BJ (cell line): ENCODE measurements at regions of chr11 and their contacts with region 1.

Region 1: DNA sequence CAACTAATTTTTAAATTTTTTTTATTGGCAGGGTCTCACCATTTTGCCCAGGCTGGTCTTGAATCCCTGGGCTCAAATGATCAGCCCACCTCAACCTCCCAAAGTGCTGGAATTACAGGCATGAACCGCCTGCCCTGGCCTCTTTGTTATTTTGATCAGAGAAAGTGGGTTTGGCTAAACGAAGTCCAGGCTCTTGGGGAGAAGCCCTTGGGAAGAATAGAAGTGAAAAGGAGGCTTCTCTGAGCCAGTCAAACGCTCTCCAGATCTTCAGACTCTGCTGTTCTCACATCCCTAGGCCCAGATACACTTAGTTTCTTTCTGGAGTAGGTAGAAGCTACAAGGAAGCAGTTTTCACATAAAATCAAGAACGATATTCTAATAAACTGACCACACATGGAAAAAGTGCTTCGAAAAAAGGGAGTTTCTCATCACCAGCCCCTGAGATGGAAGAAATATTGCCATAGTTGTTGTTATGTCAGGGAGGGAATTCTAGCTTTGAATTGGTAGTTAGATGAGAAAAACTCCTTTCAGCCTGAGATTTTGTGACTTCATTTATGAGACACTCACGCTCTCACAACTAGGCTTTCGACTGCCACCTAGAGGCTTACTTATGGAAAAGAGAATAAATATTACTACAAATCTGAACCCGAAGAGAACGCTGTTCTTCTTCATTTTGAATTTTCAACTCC is 41.7 kb upstream of the AQP11 start:
- DNase-seq: no peak
- H3K4me3 ChIP-seq: no peak overlapping the region
- H3K27me3 ChIP-seq: no peaks in the 10 kb centered on the region
- CTCF ChIP-seq: peak; percentile 66

Region 2: DNA sequence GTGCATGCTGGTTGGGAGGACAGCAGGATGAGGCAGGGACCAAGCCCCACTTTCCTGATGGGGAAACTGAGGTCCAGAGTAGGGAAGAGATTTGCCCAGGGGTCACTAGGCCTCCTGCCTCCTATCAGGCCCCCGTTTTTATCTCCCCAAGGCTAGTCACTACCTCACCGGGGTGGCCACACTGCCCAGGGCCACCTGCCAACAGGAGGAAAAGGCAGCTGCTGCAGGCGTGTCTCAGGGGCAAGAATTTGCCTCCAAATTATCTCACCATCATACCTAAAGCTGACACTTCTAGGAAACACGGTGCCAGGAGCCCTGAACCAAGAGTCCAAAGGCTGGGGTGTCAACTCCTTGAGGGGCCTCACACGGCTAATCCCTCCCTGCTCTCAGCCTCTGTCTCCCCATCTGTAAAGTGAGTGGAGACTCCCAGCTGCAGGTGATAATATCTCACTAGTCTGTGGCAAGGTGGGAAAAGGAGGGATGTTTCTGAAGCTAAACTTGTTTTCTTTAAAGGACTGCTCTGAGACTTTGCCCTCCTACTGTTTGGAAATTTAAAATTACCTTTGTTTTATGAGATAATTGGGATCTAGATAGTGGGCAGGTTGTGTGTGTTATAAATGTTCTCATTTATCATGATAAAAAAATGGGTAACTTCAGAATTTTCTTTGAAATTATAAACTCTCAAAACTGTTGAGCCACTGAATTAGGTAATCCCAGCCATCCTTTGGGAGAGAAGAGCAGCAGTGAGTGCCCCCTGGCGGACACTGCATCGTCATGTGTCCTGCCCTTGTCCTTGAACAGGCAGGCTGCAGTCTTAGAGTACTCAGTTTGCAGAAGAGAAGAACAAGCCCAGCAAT is 360.0 kb before region 1 on chr11:
- CTCF ChIA-PET with region 1: interaction called, 20 read pairs
- POLR2A ChIA-PET with region 1: no interaction called
- DNase-seq: no peak
- H3K4me3 ChIP-seq: no peak overlapping the region
- H3K27me3 ChIP-seq: peaks cover 6% of the 10 kb centered on the region
- CTCF ChIP-seq: peak; percentile 92

Region 3: DNA sequence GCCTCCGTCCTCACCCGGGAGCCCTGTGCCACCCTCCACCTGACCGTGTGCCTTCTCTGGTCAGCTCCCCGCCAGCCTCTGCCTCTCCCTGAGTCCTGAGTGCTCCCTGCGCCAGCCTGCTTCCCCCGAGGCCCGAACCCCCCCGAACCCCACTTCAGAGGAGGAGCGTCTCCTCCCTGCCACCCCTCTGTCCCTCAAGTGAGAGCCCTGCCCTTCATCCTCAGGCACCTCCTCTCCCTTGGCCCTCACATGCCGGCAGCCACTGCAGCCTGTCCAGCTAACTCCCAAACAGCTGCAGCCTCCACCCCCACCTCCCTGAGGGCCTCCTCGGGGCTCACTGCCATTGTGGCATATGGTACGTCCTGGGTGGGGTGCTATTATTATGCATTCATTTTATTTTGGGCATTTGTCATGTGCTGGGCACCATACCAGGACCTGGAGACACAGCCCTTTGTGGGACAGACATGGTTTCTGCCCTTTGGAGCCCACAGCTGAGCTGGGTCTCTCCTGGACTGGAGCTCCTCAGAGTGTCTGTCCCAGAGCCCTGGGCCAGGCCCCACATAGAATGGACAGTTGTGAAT is 352.7 kb before region 1 on chr11:
- CTCF ChIA-PET with region 1: interaction called, 77 read pairs
- POLR2A ChIA-PET with region 1: no interaction called
- DNase-seq: no peak
- H3K4me3 ChIP-seq: no peak overlapping the region
- H3K27me3 ChIP-seq: no peaks in the 10 kb centered on the region; the same call in 1 of the 2 replicates
- CTCF ChIP-seq: no peak

Region 4: DNA sequence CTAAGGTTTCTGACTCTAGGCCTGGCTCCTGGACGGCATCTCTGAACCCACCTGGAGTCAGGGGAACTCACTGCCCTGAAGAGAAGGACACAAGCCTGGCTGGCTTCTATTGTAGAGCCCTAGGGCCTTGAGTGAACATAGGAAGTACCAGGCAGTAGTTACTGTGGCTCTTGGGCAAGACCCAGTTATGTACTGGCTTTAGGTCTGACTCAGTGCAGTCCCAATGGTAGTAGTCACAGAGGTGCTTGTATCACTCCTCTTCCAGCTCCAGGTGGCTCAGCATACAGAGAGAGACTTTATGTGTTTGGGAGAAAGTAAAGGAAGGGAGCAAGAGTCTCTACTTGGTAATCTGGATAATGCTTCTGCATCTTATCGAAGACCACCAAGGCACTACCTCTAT is 60.2 kb before region 1 on chr11:
- CTCF ChIA-PET with region 1: no interaction called
- POLR2A ChIA-PET with region 1: no interaction called
- DNase-seq: no peak
- H3K4me3 ChIP-seq: no peak overlapping the region
- H3K27me3 ChIP-seq: no peaks in the 10 kb centered on the region; the same call in none of the 2 replicates
- CTCF ChIP-seq: no peak

Region 5: DNA sequence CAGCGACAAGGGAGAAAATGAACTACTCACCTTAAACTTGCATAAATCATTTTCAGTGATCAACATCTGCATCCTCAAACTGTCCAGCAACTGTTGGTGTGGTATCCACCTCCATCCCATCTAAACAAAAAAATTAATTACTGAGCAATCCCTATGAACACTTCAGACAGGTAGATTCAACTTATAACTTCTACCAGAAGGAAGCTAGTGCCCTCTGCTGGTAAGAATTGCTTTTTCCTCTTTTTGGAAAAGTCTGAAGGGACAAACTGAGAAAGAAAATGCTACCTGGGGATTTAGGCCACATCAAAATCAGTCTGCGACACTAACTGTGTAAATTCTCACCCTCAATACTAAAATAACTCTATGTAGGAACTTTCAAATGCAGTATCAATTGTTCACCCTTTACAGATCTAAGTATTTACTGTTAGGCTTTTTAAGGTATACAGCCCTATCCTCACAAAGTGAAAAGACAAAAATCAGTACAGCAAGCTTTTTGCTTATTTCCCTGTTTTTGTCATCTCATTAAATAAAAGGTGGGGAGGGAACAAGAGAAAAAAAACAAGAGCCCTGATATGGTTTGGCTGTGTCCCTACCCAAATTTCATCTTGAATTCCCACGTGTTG is 71.7 kb after region 1 on chr11:
- CTCF ChIA-PET with region 1: interaction called, 18 read pairs
- POLR2A ChIA-PET with region 1: no interaction called
- DNase-seq: no peak
- H3K4me3 ChIP-seq: no peak overlapping the region
- H3K27me3 ChIP-seq: no peaks in the 10 kb centered on the region
- CTCF ChIP-seq: peak; percentile 75

Region 6: GRCh38 chr11:77654770-77655434 is 106.9 kb after region 1 on chr11:
- CTCF ChIA-PET with region 1: no interaction called
- POLR2A ChIA-PET with region 1: no interaction called
- DNase-seq: no peak
- H3K4me3 ChIP-seq: no peak overlapping the region
- H3K27me3 ChIP-seq: no peaks in the 10 kb centered on the region
- CTCF ChIP-seq: no peak

Region 7: DNA sequence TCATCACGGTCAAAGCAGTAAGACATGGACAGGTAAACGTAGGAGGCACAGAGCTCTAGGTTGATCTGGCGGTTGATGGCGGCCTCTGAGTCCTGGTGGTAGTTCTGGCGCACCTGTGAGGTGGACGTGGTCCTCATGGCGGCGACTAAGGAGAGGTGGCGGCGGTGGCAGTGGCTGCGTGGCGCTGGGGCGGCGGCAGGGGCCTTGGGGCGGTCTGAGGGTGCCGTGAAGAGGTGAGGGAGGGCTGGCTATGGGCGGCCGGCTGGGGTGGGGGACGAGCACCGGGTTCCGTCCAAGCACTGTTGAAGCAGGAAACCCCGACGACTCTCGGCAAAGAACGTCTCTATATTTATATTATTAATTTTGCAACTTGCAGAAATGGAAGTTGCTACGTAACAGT is 186.9 kb after region 1 on chr11:
- CTCF ChIA-PET with region 1: no interaction called
- POLR2A ChIA-PET with region 1: no interaction called
- DNase-seq: no peak
- H3K4me3 ChIP-seq: no peak overlapping the region
- H3K27me3 ChIP-seq: no peaks in the 10 kb centered on the region
- CTCF ChIP-seq: no peak